Ovary (tissue), 10 donors: ENCODE measurements at regions of chr2 and their contacts with region 1.

Region 1: DNA sequence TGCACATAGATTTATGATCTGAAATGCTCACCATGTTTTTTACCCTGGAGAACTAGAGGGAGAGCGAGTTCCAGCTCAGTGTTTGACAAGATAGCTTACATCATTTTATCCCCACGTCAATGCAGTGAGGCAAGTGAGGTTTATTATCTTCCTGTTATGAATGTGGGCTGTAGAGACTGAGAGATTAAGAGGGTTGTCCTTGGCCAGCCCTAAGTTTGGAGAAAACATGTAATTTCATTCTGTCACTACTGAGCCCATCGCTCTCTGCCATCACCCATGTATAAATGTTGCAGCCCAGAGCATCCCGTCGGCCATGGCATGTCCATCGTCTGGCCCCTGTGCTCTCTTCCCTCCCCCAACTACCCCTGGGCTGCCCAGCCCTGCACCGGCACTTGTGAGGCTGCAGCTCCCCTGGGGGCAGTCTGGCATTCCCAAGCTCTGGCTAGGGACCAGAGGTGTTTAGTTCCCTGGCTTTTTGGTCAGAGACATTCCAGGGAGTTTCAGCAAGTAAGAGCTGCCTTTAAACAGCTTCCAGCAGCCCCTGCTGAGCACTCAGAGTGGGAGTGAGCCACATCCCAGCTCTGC is 136.7 kb downstream of the ANTXR1 start:
- DNase-seq: peak; percentile 75 to 83 (median 77)
- H3K4me3 ChIP-seq: no peak overlapping the region
- H3K27ac ChIP-seq: peak overlapping the region in 1 of 2 donors; percentile 90
- H3K4me1 ChIP-seq: peaks cover 35% of the 10 kb centered on the region
- H3K27me3 ChIP-seq: no peaks in the 10 kb centered on the region
- CTCF ChIP-seq: no peak
- EP300 ChIP-seq: no peak
- POLR2A ChIP-seq: peak; percentile 8

Region 2: GRCh38 chr2:69082430-69082997 is 67.2 kb before region 1 on chr2:
- intact Hi-C with region 1: loop called in 1 of 4 experiments (anchors 10 kb)
- DNase-seq: peak; percentile 76 to 88 (median 77)
- H3K4me3 ChIP-seq: no peak overlapping the region
- H3K27ac ChIP-seq: peak overlapping the region; percentile 22 to 64
- H3K4me1 ChIP-seq: peaks cover 35% of the 10 kb centered on the region
- H3K27me3 ChIP-seq: no peaks in the 10 kb centered on the region
- CTCF ChIP-seq: no peak
- EP300 ChIP-seq: peak; percentile 17
- POLR2A ChIP-seq: no peak